ENCODE measurements at regions of chr15 and their contacts with region 1.

Region 1: DNA sequence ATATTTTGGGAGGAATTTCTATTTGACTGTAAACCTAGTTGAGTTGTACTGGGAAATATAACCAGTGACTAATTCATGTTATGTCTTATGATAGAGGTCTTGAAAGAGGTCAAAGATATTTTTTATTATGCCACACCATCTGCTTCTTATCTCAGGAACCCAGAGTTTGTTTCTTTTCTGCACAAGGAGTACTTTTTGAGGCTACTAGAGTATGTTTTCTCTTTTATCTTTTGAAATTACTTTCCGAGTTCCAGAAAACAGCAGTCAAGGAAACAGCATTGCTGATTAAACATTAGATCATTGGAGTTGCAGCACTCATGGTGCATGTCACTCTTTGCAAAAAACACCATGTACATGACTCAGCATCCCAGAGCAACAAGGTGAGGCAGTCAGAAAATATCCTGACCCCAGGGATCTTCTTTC is 645.8 kb upstream of the NR2F2 start:
- DNase-seq: peak; percentile 32 to 67
- H3K4me3 ChIP-seq: no peak overlapping the region
- H3K27ac ChIP-seq: peak overlapping the region; percentile 76
- H3K4me1 ChIP-seq: peaks cover 18% of the 10 kb centered on the region
- H3K27me3 ChIP-seq: no peaks in the 10 kb centered on the region
- CTCF ChIP-seq: no peak

Region 2: GRCh38 chr15:95559875-95560394 is 124.8 kb before region 1 on chr15:
- CTCF ChIA-PET with region 1: no interaction called
- POLR2A ChIA-PET with region 1: no interaction called
- intact Hi-C with region 1: loop called (anchors 5 kb)
- DNase-seq: peak; percentile 28 to 69
- H3K4me3 ChIP-seq: no peak overlapping the region
- H3K27ac ChIP-seq: peak overlapping the region; percentile 82
- H3K4me1 ChIP-seq: peaks cover 38% of the 10 kb centered on the region
- H3K27me3 ChIP-seq: no peaks in the 10 kb centered on the region
- CTCF ChIP-seq: no peak

Measured in PC-9 (cell line).